Mammary epithelial cell (primary cell): ENCODE measurements at regions of chr12 and their contacts with region 1.

Region 1: DNA sequence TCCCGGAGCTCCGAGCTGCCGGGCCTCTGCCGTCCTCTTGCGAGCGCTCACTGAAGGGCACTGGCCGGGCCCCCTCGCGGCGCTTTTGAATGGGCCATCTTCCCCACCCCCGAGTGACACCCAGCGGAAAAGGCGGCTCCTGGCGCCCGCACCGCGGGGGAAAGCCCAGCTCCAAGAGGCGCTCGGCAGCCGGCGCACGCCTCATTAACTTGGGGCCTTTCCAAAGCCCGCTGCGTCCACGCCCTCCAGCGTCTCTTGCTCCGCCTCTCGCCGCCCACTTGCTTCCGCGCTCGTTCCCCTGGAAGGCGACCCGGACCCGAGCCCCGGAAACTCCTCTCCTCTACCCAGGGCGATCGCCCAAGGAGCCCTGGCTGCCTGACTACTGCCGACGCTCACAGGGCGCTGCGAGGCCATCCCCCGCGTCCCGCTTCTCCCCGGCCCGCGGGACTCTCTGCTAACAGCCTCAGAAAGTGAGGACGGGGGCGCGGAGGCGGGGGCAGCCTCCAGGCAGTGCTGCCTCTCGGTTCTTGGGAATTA is at the start of gene PHLDA1:
- DNase-seq: peak; percentile 98
- H3K4me3 ChIP-seq: peak within 1 kb of the TSS; percentile 87 to 96 (median 93)
- H3K27ac ChIP-seq: peak within 1 kb of the TSS; percentile 93
- H3K4me1 ChIP-seq: peaks cover 9% of the 10 kb centered on the region
- H3K27me3 ChIP-seq: no peaks in the 10 kb centered on the region
- CTCF ChIP-seq: peak; percentile 26 to 79
- total RNA-seq, gene PHLDA1: 161 to 545 TPM

Region 2: DNA sequence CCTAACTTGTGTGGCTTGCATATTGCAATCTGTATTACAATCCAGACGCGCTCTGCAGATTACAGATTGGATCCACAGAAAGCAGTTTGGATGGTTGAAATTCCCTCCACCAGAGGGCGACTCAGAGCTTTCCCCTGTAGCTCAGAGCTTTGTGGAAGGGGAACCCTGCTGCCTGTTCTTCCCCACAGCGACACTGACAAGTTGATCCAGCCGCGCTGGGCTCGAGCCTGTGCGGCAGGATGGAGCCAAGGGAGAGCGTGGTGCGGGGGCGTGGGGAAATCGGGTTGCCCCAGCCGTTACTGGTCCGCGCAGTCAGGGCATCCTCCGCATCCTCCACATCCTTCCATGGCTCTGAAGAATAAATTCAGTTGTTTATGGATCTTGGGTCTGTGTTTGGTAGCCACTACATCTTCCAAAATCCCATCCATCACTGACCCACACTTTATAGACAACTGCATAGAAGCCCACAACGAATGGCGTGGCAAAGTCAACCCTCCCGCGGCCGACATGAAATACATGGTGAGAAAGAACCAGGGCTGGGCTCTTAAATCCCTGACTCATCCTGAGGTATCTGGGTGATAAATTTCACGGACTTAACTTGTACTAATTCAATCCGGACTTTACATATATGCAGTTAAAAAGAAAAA is 697.1 kb before region 1 on chr12 and contains the start of gene GLIPR1L1:
- CTCF ChIA-PET with region 1: no interaction called
- dilution Hi-C with region 1: no loop called
- in situ Hi-C with region 1: no loop called
- intact Hi-C with region 1: loop called (anchors 5 kb)
- DNase-seq: peak; percentile 75
- H3K4me3 ChIP-seq: peak within 1 kb of the TSS; percentile 30 to 62 (median 54)
- H3K27ac ChIP-seq: no peak within 1 kb of the TSS
- H3K4me1 ChIP-seq: peaks cover 5% of the 10 kb centered on the region
- H3K27me3 ChIP-seq: no peaks in the 10 kb centered on the region
- CTCF ChIP-seq: peak; percentile 76 to 87
- total RNA-seq, gene GLIPR1L1: not detected

Region 3: DNA sequence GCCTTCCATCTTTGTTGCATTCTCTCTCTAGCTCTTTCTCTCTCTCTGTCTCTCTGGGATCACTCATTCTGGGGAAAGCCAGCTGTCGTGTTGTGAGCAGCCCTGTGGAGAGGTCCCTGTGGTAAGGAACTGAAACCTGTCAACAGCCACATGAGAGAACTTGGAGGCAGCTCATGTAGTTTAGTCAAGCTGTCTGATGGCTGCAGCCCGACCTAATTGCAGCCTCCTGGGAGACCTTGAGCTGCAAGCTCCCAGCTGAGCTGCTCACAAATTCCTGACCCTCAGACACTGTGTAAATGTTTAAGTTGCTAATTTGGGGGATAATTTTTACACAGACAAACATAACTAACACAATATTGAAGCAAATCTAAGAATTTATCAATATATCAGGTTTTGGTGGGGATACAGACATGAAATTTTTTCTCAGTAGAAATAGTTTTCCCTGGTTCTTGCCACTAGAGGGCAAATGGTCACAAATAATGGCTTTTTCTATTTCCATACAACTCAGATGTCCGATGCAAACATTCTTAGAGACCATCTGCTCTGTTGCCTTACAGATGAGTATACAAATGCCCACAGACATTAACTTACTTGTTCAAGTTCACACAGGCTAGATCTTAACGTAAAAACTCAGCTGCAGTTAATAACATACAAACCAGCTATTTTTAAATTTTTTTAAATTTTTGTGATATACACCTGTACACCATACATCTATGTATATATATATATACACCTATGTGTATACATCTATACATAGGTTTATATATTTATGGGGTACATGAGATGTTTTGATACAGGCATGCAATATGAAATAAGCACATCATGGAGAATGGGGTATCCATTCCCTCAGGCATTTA is 504.7 kb before region 1 on chr12:
- CTCF ChIA-PET with region 1: interaction called, 5 read pairs
- dilution Hi-C with region 1: no loop called
- in situ Hi-C with region 1: loop called (anchors 5 to 10 kb)
- intact Hi-C with region 1: loop called (anchors 1 kb)
- DNase-seq: peak; percentile 34
- H3K4me3 ChIP-seq: no peak overlapping the region
- H3K27ac ChIP-seq: no peak overlapping the region
- H3K4me1 ChIP-seq: no peaks in the 10 kb centered on the region
- H3K27me3 ChIP-seq: no peaks in the 10 kb centered on the region
- CTCF ChIP-seq: peak; percentile 47 to 69

Region 4: GRCh38 chr12:75623631-75624118 is 407.9 kb before region 1 on chr12:
- CTCF ChIA-PET with region 1: interaction called, 3 read pairs
- dilution Hi-C with region 1: no loop called
- in situ Hi-C with region 1: no loop called
- intact Hi-C with region 1: loop called (anchors 1 kb)
- DNase-seq: peak; percentile 53
- H3K4me3 ChIP-seq: no peak overlapping the region
- H3K27ac ChIP-seq: peak overlapping the region; percentile 18
- H3K4me1 ChIP-seq: peaks cover 9% of the 10 kb centered on the region
- H3K27me3 ChIP-seq: no peaks in the 10 kb centered on the region
- CTCF ChIP-seq: peak; percentile 30 to 60

Region 5: GRCh38 chr12:75641031-75641780 is 390.4 kb before region 1 on chr12:
- CTCF ChIA-PET with region 1: no interaction called
- dilution Hi-C with region 1: no loop called
- in situ Hi-C with region 1: loop called in 1 of 2 experiments (anchors 10 kb)
- intact Hi-C with region 1: loop called (anchors 5 kb)
- DNase-seq: peak; percentile 93
- H3K4me3 ChIP-seq: no peak overlapping the region
- H3K27ac ChIP-seq: peak overlapping the region; percentile 100
- H3K4me1 ChIP-seq: peaks cover 48% of the 10 kb centered on the region
- H3K27me3 ChIP-seq: no peaks in the 10 kb centered on the region
- CTCF ChIP-seq: peak in 1 of 2 donors; percentile 5

Region 6: GRCh38 chr12:75814851-75815754 is 216.5 kb before region 1 on chr12:
- CTCF ChIA-PET with region 1: interaction called, 3 read pairs
- dilution Hi-C with region 1: no loop called
- in situ Hi-C with region 1: loop called in 1 of 2 experiments (anchors 5 kb)
- intact Hi-C with region 1: no loop called
- DNase-seq: peak; percentile 66
- H3K4me3 ChIP-seq: no peak overlapping the region
- H3K27ac ChIP-seq: peak overlapping the region; percentile 60
- H3K4me1 ChIP-seq: peaks cover 23% of the 10 kb centered on the region
- H3K27me3 ChIP-seq: no peaks in the 10 kb centered on the region
- CTCF ChIP-seq: no peak